ENCODE measurements at regions of chr5 and their contacts with region 1.

Region 1: GRCh38 chr5:151080623-151081430 is at the start of gene TNIP1:
- DNase-seq: peak; percentile 94
- H3K4me3 Mint-ChIP-seq: peak within 1 kb of the TSS; percentile 83
- H3K27ac Mint-ChIP-seq: peak within 1 kb of the TSS; percentile 93
- H3K4me1 Mint-ChIP-seq: peaks cover 72% of the 10 kb centered on the region
- H3K27me3 Mint-ChIP-seq: no peaks in the 10 kb centered on the region
- total RNA-seq, gene TNIP1: 238 to 263 TPM

Region 2: DNA sequence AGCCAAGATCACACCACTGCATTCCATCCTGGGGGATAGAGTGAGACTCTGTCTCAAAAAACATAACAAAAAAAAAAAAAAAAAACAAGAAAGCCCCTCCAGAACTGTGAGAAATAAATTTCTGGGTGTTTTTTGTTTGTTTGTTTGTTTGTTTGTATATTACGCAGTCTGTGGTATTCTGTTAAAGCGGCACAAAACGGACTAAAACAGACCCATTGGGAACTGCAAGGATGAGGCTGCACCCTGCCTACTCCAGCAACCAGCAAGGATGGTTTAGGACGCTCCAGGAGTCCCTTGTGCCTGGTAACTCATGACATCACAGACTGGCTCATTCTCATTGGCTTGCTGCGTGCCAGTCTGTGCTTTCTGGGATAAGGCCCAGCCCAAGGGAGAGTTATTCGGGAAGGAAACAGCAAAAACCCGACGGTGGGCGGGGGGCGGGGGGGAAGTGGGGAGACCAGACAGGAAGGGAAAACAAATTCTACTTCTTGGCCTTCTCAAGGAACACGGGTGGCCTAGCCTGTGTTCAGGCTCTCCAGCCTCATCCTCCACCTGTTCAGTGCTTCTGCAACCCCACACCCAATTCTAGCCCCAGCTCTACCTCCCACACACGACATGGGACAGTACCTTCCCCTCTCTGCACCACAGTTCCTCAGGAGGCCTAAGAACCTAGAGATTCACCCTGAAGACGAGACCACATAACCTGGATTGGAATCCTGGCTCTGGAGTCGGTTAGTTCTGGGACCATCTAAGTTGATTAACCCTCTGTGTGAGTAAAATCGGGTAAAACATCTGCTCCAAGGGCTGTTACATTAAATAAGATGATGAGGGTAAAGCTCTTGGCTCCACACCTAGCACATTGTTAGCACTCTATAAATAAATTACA is 670.9 kb before region 1 on chr5:
- CTCF ChIA-PET with region 1: no interaction called
- intact Hi-C with region 1: loop called (anchors 2 kb)
- DNase-seq: peak; percentile 70
- H3K4me3 Mint-ChIP-seq: peak overlapping the region; percentile 98
- H3K27ac Mint-ChIP-seq: peak overlapping the region; percentile 98
- H3K4me1 Mint-ChIP-seq: peaks cover 39% of the 10 kb centered on the region
- H3K27me3 Mint-ChIP-seq: no peaks in the 10 kb centered on the region

Region 3: GRCh38 chr5:151051066-151051930 is 29.5 kb before region 1 on chr5:
- CTCF ChIA-PET with region 1: interaction called, 10 read pairs
- intact Hi-C with region 1: no loop called
- DNase-seq: peak; percentile 85
- H3K4me3 Mint-ChIP-seq: no peak overlapping the region
- H3K27ac Mint-ChIP-seq: peak overlapping the region; percentile 16
- H3K4me1 Mint-ChIP-seq: no peaks in the 10 kb centered on the region
- H3K27me3 Mint-ChIP-seq: no peaks in the 10 kb centered on the region

Region 4: DNA sequence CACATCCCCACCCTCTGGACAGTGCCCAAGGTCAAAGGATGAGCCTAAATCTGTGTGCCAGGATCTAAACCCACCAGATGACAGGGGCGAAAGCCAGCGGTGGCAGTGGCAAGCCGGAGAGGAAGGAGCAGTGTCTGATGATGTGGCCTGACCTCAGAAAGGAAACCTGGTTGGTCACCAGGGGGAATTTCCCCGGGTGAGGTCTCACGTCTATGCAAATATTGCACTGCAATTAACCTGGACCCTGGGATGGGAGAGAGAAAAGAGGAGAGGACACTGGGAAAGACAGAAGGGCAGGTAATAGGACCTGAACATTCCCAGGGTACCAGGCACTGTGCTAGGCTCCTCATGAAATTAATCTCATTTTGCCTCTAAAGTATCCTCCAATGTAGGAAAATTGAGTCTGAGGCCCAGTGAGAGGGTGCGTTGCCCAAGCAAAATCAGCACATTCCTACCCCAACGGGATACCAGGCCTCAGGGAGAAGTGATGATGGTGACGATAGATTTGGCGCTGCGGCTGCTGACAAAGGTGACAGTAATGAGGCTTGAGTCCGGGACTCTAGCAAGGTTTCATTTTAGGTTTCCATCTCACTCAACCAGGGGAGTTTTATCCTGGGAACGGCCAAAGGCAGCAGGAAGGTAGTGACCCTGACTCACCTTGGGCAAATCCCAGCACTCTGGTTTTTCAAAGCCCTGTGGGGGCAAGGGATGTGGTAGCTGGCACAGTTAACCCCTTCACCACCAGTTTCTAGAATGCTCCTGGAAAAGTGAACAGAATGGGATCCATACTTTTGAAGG is 13.4 kb after region 1 on chr5:
- CTCF ChIA-PET with region 1: interaction called, 18 read pairs
- intact Hi-C with region 1: loop called (anchors 1 kb)
- DNase-seq: peak; percentile 76
- H3K4me3 Mint-ChIP-seq: peak overlapping the region; percentile 8
- H3K27ac Mint-ChIP-seq: peak overlapping the region; percentile 86
- H3K4me1 Mint-ChIP-seq: peaks cover 68% of the 10 kb centered on the region
- H3K27me3 Mint-ChIP-seq: no peaks in the 10 kb centered on the region

Region 5: GRCh38 chr5:151150471-151151262 is 69.8 kb after region 1 on chr5:
- CTCF ChIA-PET with region 1: interaction called, 3 read pairs
- intact Hi-C with region 1: loop called (anchors 1 kb)
- DNase-seq: peak; percentile 91
- H3K4me3 Mint-ChIP-seq: peak overlapping the region; percentile 64
- H3K27ac Mint-ChIP-seq: peak overlapping the region; percentile 90
- H3K4me1 Mint-ChIP-seq: peaks cover 94% of the 10 kb centered on the region
- H3K27me3 Mint-ChIP-seq: no peaks in the 10 kb centered on the region

Region 6: DNA sequence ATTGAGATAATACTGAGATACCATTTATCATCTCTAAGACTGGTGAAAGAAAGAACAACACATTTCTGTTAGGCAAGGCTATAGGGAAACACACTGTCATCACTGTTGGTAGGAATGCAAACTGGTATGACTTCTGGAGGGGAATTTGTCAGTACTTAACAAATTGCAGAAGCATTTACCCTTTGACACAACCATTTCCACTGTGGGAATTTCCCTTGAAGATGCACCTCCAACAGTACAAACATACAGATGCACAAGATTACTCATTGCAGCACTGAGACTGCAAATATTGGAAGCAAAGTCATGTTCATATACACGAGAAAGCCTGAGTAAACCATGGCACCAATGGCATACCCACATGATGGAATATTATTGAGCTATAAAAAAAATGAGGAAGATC is 189.8 kb after region 1 on chr5:
- CTCF ChIA-PET with region 1: no interaction called
- intact Hi-C with region 1: loop called (anchors 1 kb)
- DNase-seq: peak; percentile 52
- H3K4me3 Mint-ChIP-seq: no peak overlapping the region
- H3K27ac Mint-ChIP-seq: no peak overlapping the region
- H3K4me1 Mint-ChIP-seq: no peaks in the 10 kb centered on the region
- H3K27me3 Mint-ChIP-seq: no peaks in the 10 kb centered on the region

Measured in activated naive CD4-positive, alpha-beta T cell treated with anti-CD3 and anti-CD28 coated beads for 36 hours (primary cell).